IMR-90 (cell line): ENCODE measurements at regions of chr2 and their contacts with region 1.

Region 1: DNA sequence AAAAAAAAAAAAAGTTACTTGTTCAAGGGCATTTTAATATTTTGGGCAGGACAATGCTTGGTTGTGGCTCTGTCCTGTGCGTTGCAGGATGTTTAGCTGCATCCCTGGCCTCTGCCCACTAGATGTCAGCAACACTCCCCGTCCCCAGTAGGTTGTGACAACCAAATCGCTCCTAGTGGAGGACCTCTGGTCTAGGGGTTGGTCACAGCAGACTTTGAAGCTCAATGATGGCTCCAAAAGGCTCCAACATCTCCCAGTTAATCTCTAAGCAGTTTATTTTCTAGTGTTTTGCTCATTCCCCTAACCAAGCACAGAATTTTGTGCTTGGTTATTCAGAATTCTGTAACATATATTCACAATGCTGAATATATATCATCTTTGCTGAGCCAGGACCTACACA is 67.0 kb downstream of the CHRNA1 start:
- DNase-seq: peak; percentile 57
- ATAC-seq: peak; percentile 93
- H3K4me3 ChIP-seq: no peak overlapping the region
- H3K27ac ChIP-seq: no peak overlapping the region
- H3K4me1 ChIP-seq: no peaks in the 10 kb centered on the region
- H3K27me3 ChIP-seq: peaks cover 34% of the 10 kb centered on the region
- CTCF ChIP-seq: peak; percentile 82
- POLR2A ChIP-seq: no peak
- RAD21 ChIP-seq: peak; percentile 72

Region 2: DNA sequence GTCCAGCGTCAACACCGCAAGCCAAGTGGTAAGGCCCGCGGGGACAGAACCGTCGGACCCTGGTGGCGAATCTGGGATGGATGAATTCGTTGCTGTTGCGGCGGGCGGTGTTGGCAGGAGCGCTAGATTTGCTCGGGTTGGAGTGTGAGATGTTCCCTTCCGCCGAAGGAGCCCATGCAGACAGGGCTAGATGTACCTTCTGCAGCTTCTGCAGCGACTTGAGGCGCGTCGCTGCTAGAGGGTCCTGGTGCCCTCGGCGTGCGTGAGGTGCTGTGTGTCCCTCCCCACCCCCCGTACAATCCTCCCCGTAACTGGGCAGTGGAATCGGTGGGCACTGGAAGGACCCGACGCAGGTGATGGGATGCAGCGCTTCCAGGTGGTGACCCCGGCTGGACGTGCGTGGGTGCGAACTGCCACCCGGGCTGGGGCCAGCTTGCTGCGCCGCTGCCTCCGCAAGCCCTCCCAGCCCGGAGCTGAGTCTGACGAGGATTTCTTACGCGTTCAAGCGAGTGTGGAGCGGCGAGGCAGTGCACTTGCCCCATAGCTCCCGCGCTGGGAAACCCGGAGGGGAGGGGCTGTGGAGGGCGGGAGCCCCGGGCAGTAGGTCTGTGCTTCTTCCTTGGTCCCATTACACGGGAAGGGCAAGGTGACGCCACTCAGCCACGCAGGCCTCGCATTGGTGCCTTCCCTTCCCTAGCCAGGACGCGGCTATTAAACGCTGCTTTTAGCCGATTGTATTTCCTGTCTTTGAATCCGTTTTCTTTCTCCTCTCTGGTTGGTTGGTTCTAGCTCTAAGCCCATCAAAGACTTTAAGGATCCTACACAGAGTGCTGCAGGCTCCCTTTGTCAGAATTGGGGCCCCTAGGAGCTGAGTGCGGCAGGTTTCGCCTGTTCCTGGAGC is 32.8 kb after region 1 on chr2:
- CTCF ChIA-PET with region 1: no interaction called
- POLR2A ChIA-PET with region 1: no interaction called
- dilution Hi-C with region 1: no loop called
- in situ Hi-C with region 1: no loop called
- intact Hi-C with region 1: no loop called
- DNase-seq: peak; percentile 10
- ATAC-seq: peak; percentile 81
- H3K4me3 ChIP-seq: peak overlapping the region; percentile 23
- H3K27ac ChIP-seq: no peak overlapping the region
- H3K4me1 ChIP-seq: no peaks in the 10 kb centered on the region
- H3K27me3 ChIP-seq: peaks cover 62% of the 10 kb centered on the region
- CTCF ChIP-seq: no peak
- POLR2A ChIP-seq: no peak
- RAD21 ChIP-seq: no peak

Region 3: GRCh38 chr2:174748948-174749347 is 51.7 kb after region 1 on chr2:
- CTCF ChIA-PET with region 1: interaction called, 6 read pairs
- POLR2A ChIA-PET with region 1: no interaction called
- dilution Hi-C with region 1: no loop called
- in situ Hi-C with region 1: no loop called
- intact Hi-C with region 1: loop called (anchors 5 kb)
- DNase-seq: peak; percentile 50
- ATAC-seq: peak; percentile 94
- H3K4me3 ChIP-seq: no peak overlapping the region
- H3K27ac ChIP-seq: no peak overlapping the region
- H3K4me1 ChIP-seq: no peaks in the 10 kb centered on the region; the same call in 1 of the 2 replicates
- H3K27me3 ChIP-seq: peaks cover 6% of the 10 kb centered on the region
- CTCF ChIP-seq: peak; percentile 77
- POLR2A ChIP-seq: no peak
- RAD21 ChIP-seq: peak; percentile 82

Region 4: DNA sequence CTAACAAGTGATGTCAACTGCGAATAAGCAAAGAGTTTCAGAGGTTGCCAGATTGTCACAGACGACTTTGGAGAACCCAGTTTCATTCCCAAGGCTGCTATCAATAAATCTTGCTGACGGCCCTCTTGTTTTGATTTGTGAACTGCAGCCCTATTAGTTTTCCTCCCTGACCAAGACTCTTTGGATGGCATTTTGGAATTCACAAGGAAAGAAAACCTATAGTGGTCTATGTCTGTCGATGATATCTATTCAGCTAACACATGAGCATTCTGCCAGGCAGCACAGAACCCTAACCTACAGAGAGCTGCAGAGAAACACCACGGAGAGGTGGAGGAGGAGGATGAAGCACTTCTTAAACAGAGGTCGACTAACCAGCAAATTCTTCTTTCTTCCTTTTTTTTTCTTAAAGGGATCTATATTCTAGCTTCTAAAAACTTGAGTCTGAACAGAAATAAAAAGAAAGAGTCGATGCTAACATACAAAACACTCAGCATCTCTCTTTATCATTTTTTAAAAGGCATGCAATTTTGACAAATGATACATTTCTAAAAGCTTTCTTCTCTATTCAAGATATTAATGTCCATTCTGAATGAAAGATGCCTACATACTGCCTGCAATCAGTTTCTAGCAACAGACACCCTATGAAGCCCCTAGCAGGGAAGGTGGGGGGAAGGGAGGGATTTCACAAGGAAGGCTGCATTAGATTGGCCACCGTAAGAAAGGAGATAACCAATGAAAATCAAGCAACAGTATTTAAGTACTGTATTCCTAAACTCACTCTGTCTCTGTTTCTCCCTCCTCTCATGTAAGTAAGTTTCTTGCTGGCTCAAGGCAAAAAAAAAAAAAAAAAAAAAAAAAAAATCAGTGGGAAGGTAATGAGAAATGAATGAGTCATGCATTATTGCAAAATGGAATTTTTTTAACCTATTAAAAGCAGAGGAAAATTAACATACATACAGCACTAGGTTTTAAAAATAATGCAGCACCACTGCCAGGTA is 150.0 kb after region 1 on chr2:
- CTCF ChIA-PET with region 1: no interaction called
- POLR2A ChIA-PET with region 1: no interaction called
- dilution Hi-C with region 1: no loop called
- in situ Hi-C with region 1: no loop called
- intact Hi-C with region 1: loop called (anchors 5 kb)
- DNase-seq: peak; percentile 97
- ATAC-seq: peak; percentile 96
- H3K4me3 ChIP-seq: peak overlapping the region; percentile 65
- H3K27ac ChIP-seq: peak overlapping the region; percentile 75; the same call in 1 of the 2 replicates
- H3K4me1 ChIP-seq: peaks cover 3% of the 10 kb centered on the region; the same call in 1 of the 2 replicates
- H3K27me3 ChIP-seq: no peaks in the 10 kb centered on the region
- CTCF ChIP-seq: no peak
- POLR2A ChIP-seq: peak; percentile 37; the same call in 1 of the 2 replicates
- RAD21 ChIP-seq: no peak

Region 5: DNA sequence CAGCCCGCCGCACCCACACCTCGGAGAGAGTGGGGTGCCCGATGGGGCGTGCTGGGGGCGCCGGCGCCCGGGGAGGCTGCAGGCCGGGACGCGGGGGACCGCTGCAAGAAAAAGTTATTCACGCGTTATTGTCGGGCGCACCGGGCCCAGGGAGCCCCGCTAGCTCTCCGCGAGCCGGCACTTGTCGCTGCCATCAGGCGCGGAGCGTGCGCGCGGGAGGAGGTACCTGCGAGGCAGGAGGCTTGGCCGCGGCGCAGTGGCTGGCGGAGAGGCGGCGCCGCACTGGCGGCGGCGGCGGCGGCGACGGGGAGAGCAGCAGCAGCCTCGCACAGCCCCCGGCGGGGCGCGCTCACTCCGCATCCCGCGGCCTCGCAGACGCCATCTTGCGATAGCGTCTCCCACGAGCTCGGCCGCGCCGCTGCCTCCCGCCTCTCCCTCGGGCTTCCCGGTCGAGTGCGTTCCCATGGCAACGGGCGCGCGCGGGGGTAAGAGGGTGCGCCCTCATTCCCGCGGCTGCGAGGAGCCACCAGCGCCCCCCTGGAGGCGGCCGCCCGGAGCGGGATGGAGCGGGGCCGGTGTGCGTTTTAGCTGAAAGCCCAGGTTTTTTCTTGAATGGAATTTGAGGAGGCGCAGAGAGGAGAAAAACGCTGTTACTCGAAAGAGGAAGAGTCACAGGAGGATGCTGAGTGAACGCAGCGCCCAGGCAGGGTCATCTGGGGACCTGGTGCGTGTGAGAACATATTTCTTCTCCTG is 307.9 kb after region 1 on chr2 and contains the start of gene CHN1:
- CTCF ChIA-PET with region 1: interaction called, 3 read pairs
- POLR2A ChIA-PET with region 1: no interaction called
- dilution Hi-C with region 1: no loop called
- in situ Hi-C with region 1: no loop called
- intact Hi-C with region 1: loop called (anchors 5 kb)
- DNase-seq: peak; percentile 69
- ATAC-seq: peak; percentile 95
- H3K4me3 ChIP-seq: peak within 1 kb of the TSS; percentile 66
- H3K27ac ChIP-seq: no peak within 1 kb of the TSS; the same call in 1 of the 2 replicates
- H3K4me1 ChIP-seq: no peaks in the 10 kb centered on the region
- H3K27me3 ChIP-seq: peaks cover 22% of the 10 kb centered on the region
- CTCF ChIP-seq: 0 out of 2 replicates have a peak, but pooled peaks have one; percentile 4
- POLR2A ChIP-seq: no peak
- RAD21 ChIP-seq: 0 out of 2 replicates have a peak, but pooled peaks have one; percentile 8
- total RNA-seq, gene CHN1: 54.4 and 58.4 TPM in 2 replicates

Region 6: GRCh38 chr2:175111200-175111657 is 414.0 kb after region 1 on chr2:
- CTCF ChIA-PET with region 1: no interaction called
- POLR2A ChIA-PET with region 1: no interaction called
- dilution Hi-C with region 1: no loop called
- in situ Hi-C with region 1: no loop called
- intact Hi-C with region 1: loop called (anchors 5 kb)
- DNase-seq: peak; percentile 49
- ATAC-seq: peak; percentile 73
- H3K4me3 ChIP-seq: no peak overlapping the region
- H3K27ac ChIP-seq: no peak overlapping the region
- H3K4me1 ChIP-seq: peaks cover 4% of the 10 kb centered on the region
- H3K27me3 ChIP-seq: no peaks in the 10 kb centered on the region
- CTCF ChIP-seq: peak; percentile 64
- POLR2A ChIP-seq: no peak
- RAD21 ChIP-seq: peak; percentile 59

Region 7: DNA sequence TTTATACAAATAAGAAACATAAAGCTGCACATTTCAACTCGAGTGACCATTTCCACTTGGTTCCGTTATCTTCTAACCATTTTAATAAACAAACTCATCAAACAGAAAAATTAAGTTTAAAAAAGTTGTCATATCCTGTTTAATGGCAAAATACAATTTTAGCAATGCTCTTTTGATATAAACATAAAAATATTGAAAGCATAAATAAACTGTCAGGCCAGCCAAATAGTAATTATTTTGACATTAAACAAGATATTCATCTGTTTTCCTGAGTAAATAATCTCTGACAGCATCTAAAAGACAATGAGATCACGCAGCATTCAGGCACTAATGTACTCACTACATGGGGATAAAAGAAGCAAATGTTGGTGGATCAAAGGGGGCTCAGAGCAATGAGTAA is 629.5 kb after region 1 on chr2:
- CTCF ChIA-PET with region 1: no interaction called
- POLR2A ChIA-PET with region 1: no interaction called
- dilution Hi-C with region 1: no loop called
- in situ Hi-C with region 1: no loop called
- intact Hi-C with region 1: loop called (anchors 2 kb)
- DNase-seq: no peak
- ATAC-seq: no peak
- H3K4me3 ChIP-seq: no peak overlapping the region
- H3K27ac ChIP-seq: no peak overlapping the region
- H3K4me1 ChIP-seq: no peaks in the 10 kb centered on the region
- H3K27me3 ChIP-seq: no peaks in the 10 kb centered on the region
- CTCF ChIP-seq: no peak
- POLR2A ChIP-seq: no peak
- RAD21 ChIP-seq: no peak